ENCODE measurements at regions of chr6 and their contacts with region 1.

Region 1: GRCh38 chr6:118551063-118552053 is 3.3 kb downstream of the PLN start:
- DNase-seq: peak; percentile 51
- H3K4me3 ChIP-seq: no peak overlapping the region
- H3K27ac ChIP-seq: no peak overlapping the region
- H3K4me1 ChIP-seq: no peaks in the 10 kb centered on the region
- CTCF ChIP-seq: peak; percentile 83

Region 2: DNA sequence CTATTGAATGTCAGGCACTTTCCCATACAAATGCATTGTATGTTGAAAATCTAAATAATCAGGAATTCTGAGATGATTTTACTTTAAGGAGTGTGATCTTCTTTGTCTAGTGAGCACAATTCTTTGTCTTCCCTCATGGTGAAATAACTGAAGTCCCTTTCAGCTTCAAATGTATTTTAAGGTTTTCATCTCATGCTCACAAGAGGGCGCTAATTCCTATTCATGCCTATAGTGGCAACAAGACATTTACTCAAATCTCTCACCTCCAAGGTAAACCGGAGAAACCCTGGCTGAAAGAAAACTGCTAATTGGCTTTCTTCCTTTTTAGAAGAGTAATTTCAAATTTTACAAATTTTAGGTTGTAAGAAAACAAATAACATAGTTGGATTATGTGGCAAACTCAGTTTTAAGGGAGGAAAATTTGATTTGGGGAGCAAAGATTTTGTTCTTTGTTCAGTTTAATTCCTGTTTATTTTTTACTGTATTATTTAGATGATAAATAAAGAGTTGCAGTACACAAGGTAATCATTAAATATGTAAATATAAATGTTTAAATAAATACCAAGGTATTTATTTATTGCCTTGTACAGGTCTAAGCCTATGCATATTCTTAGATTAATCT is 575.2 kb before region 1 on chr6:
- CTCF ChIA-PET with region 1: no interaction called
- POLR2A ChIA-PET with region 1: no interaction called
- intact Hi-C with region 1: loop called (anchors 1 kb)
- DNase-seq: peak; percentile 53
- H3K4me3 ChIP-seq: no peak overlapping the region
- H3K27ac ChIP-seq: no peak overlapping the region
- H3K4me1 ChIP-seq: no peaks in the 10 kb centered on the region
- CTCF ChIP-seq: peak; percentile 95